Activated CD4-positive, alpha-beta T cell treated with anti-CD3 and anti-CD28 coated beads for 36 hours (primary cell): ENCODE measurements at regions of chr10 and their contacts with region 1.

Region 1: GRCh38 chr10:110368002-110368401 is 63.3 kb upstream of the SMNDC1 start:
- DNase-seq: peak; percentile 27
- ATAC-seq: no peak
- H3K4me3 Mint-ChIP-seq: no peak overlapping the region
- H3K27ac Mint-ChIP-seq: no peak overlapping the region
- H3K4me1 Mint-ChIP-seq: peaks cover 70% of the 10 kb centered on the region
- H3K27me3 Mint-ChIP-seq: no peaks in the 10 kb centered on the region

Region 2: DNA sequence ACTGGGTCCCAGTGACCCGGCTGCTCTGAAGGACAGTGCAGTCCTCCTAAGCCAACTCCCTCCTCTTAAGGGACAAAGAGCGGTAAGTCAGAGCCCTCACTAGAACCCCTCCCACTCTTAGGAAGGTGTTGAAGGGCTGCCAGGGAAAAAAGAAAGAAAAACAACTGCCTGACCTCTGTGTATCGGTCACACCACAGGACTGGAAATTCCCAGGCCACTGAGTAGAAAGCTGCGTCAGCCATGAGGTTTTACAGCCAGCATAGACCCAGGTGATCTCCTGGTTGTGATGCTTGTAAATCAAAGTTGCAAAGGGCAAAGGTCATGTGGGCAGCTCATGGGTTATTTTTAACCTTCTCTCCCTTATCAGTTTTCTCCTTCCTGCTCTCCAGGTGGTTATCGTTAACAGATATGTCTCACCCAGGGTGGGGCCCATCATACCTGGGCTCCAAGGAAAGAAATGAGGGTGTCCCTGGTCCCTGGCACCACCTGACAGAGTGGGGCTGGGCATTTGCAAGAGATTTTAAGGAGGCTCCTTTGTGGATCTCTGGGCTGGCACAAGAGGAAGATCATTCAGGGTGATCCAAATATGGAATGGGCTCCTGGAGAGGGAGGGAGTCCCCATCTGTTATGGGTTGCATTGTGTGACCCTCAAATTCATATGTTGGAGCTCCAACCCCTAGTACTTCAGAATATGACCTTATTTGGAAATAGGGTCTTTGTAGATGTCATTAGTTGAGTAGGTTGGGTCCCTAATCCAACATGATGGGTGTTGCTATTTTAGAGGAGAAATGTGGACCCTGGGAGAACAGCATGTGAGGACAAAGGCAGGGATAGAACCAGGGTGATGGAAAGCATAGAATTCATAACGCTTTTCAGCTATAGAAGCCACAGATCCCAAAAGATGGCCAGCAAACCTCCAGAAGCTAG is 28.0 kb after region 1 on chr10:
- CTCF ChIA-PET with region 1: no interaction called
- POLR2A ChIA-PET with region 1: no interaction called
- intact Hi-C with region 1: loop called in 1 of 2 experiments (anchors 2 kb)
- DNase-seq: peak; percentile 74
- ATAC-seq: peak; percentile 95
- H3K4me3 Mint-ChIP-seq: no peak overlapping the region
- H3K27ac Mint-ChIP-seq: peak overlapping the region; percentile 74
- H3K4me1 Mint-ChIP-seq: peaks cover 30% of the 10 kb centered on the region
- H3K27me3 Mint-ChIP-seq: no peaks in the 10 kb centered on the region